Aorta (tissue), 5 donors: ENCODE measurements at regions of chr15 and their contacts with region 1.

Region 1: DNA sequence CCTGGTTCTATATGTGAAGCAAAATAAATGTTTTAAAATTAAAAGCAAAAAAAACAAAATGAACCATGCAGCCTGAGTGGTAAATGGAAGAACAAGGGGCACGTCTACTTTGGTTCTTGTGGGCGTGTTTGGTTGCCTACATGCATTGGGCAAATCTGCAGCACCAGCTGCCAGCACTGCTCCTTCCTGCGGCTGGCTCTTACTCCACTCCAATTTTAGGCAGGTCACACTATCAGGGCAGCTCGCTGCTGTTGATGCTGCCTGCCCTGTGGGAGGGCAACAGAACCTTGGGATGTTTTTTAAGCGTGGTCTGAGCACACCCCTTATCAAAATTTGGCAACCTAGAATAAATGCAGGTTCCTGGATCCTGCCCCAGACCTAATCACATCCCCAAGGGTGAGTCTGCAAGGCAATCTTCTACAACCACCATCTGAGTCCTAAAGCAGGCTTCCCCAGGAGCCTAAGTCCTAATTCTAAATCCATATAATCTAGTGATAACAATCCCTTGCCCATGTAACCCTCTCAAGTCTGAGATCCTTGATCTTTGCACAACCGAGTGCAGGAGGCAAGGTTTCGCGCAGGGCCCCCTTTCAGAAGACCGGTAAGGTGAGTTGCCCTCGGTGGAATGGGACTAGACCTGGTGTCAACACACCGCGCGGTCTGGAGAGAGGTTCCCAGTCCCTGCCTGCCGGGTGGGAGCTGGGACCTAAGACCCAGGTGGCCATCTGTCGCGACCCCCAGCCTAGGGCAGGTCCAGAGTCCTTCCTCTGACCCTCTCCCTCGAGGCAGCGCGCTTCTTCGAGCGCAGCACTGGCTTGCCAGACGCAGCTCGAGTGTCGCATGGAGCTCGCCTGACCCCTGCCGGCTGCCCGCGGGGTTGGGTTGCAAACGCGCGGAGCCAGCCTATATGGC is 15.9 kb downstream of the IVD start:
- DNase-seq: peak; percentile 87 to 94
- ATAC-seq: peak; percentile 95
- H3K4me3 ChIP-seq: no peak overlapping the region
- H3K27ac ChIP-seq: no peak overlapping the region
- H3K4me1 ChIP-seq: no peaks in the 10 kb centered on the region
- H3K27me3 ChIP-seq: no peaks in the 10 kb centered on the region

Region 2: GRCh38 chr15:40044717-40045571 is 376.6 kb before region 1 on chr15:
- intact Hi-C with region 1: loop called in 1 of 2 experiments (anchors 10 kb)
- DNase-seq: peak; percentile 94 to 95
- ATAC-seq: peak; percentile 93
- H3K4me3 ChIP-seq: no peak overlapping the region
- H3K27ac ChIP-seq: no peak overlapping the region
- H3K4me1 ChIP-seq: no peaks in the 10 kb centered on the region
- H3K27me3 ChIP-seq: no peaks in the 10 kb centered on the region

Region 3: GRCh38 chr15:40217159-40217824 is 204.2 kb before region 1 on chr15:
- intact Hi-C with region 1: loop called in 1 of 2 experiments (anchors 5 kb)
- DNase-seq: no peak
- ATAC-seq: peak; percentile 86
- H3K4me3 ChIP-seq: no peak overlapping the region
- H3K27ac ChIP-seq: no peak overlapping the region
- H3K4me1 ChIP-seq: no peaks in the 10 kb centered on the region
- H3K27me3 ChIP-seq: no peaks in the 10 kb centered on the region

Region 4: GRCh38 chr15:40274350-40275274 is 146.9 kb before region 1 on chr15:
- intact Hi-C with region 1: loop called (anchors 1 kb)
- DNase-seq: peak; percentile 88 to 92
- ATAC-seq: peak; percentile 78
- H3K4me3 ChIP-seq: no peak overlapping the region
- H3K27ac ChIP-seq: no peak overlapping the region
- H3K4me1 ChIP-seq: no peaks in the 10 kb centered on the region
- H3K27me3 ChIP-seq: no peaks in the 10 kb centered on the region

Region 5: DNA sequence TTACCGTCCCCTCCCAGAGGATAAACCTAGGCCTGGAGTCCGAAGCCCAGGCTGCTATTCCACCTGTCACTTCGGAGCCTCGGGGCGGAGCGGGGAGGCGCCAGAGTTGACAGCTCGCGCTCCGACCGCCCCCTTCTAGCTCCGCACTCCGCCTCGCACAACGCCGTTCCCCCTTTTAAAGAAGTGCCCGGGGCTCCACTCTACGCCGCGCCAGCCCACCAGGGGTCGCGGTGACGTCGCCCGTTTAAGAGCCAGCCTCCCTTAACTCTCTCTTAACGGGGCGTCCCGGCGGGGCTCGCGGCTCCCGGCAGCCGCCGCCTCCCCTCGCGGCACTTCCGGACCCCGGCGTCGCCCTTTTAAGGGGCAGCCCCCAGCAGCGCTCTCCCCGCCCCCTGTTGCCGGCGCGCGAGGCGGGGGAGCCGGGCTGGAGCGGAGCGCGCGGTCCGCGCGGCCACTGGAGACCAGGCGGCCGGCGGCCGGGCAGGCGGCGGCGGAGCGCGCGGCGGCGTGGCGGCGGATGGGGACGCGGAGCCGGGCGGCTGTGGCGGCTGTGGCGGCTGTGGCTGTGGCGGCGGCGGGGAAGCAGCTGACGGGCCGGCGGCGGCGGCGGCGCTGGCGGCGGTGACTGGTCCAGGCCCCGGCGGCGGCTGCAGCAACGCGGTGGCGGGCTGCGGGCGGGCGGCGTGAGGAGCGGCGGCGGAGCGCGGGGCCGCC is 98.1 kb before region 1 on chr15 and contains the start of gene INAFM2:
- intact Hi-C with region 1: loop called in 1 of 2 experiments (anchors 5 kb)
- DNase-seq: peak; percentile 96 to 97
- ATAC-seq: peak; percentile 92
- H3K4me3 ChIP-seq: peak within 1 kb of the TSS; percentile 96 to 97
- H3K27ac ChIP-seq: peak within 1 kb of the TSS; percentile 91 to 95
- H3K4me1 ChIP-seq: peaks cover 0 to 5% of the 10 kb centered on the region in 2 donors
- H3K27me3 ChIP-seq: no peaks in the 10 kb centered on the region
- total RNA-seq, gene INAFM2: 59.4 to 70.0 TPM

Region 6: DNA sequence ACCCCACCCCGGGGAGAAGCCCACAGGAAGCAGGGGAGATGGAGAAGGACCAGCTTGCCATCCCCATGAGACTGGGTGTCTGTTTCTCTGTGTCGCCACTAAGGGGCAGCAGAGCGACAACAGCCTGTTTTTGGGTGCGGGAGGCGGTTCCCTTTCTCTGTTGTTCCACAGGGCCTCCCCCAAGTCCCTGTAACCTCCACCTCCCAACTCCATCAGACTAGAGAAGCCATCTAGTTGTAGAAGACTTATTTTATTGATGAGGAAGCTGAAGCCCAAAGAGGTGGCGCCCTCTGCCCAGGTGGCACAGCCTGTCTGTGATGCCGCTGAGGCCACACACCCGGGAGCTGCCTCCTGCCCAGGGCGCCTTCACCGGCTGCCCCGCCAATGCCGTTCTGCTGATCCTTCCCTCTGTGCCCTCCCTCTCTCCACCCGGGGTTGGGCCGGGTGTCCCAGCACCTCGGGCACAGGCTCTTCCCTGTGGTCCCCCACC is 76.8 kb before region 1 on chr15:
- intact Hi-C with region 1: loop called in 1 of 2 experiments (anchors 10 kb)
- DNase-seq: peak; percentile 82 to 87
- ATAC-seq: no peak
- H3K4me3 ChIP-seq: no peak overlapping the region
- H3K27ac ChIP-seq: peak overlapping the region in 1 of 2 donors; percentile 89
- H3K4me1 ChIP-seq: peaks cover 0 to 3% of the 10 kb centered on the region in 2 donors
- H3K27me3 ChIP-seq: no peaks in the 10 kb centered on the region

Region 7: GRCh38 chr15:40367686-40368611 is 53.6 kb before region 1 on chr15:
- intact Hi-C with region 1: loop called in 1 of 2 experiments (anchors 5 kb)
- DNase-seq: peak; percentile 91 to 94
- ATAC-seq: peak; percentile 90
- H3K4me3 ChIP-seq: no peak overlapping the region
- H3K27ac ChIP-seq: no peak overlapping the region
- H3K4me1 ChIP-seq: no peaks in the 10 kb centered on the region
- H3K27me3 ChIP-seq: no peaks in the 10 kb centered on the region

Region 8: GRCh38 chr15:40470423-40471104 is 49.1 kb after region 1 on chr15 and contains the start of gene CHST14:
- intact Hi-C with region 1: no loop called
- DNase-seq: peak; percentile 68 to 86
- ATAC-seq: peak; percentile 89
- H3K4me3 ChIP-seq: peak within 1 kb of the TSS; percentile 88 to 90
- H3K27ac ChIP-seq: peak within 1 kb of the TSS in 1 of 2 donors; percentile 91
- H3K4me1 ChIP-seq: no peaks in the 10 kb centered on the region
- H3K27me3 ChIP-seq: no peaks in the 10 kb centered on the region
- total RNA-seq, gene CHST14: 14.0 to 21.4 TPM

Region 9: GRCh38 chr15:41999290-42000285 is 1578.1 kb after region 1 on chr15:
- intact Hi-C with region 1: no loop called
- DNase-seq: peak in 1 of 2 donors; percentile 56
- ATAC-seq: no peak
- H3K4me3 ChIP-seq: no peak overlapping the region
- H3K27ac ChIP-seq: no peak overlapping the region
- H3K4me1 ChIP-seq: no peaks in the 10 kb centered on the region
- H3K27me3 ChIP-seq: no peaks in the 10 kb centered on the region